Activated CD4-positive, alpha-beta T cell treated with anti-CD3 and anti-CD28 coated beads, Interleukin-2, amount 10 ng/mL, durations not matched to agents 7 days and 5 days (primary cell): ENCODE measurements at regions of chr12 and their contacts with region 1.

Region 1: GRCh38 chr12:55817346-55818139 is at the starts of genes ORMDL2 and SARNP:
- DNase-seq: peak; percentile 99
- H3K4me3 Mint-ChIP-seq: no peak within 1 kb of the TSS
- H3K27ac Mint-ChIP-seq: no peak within 1 kb of the TSS
- H3K4me1 Mint-ChIP-seq: peaks cover 44% of the 10 kb centered on the region
- H3K27me3 Mint-ChIP-seq: no peaks in the 10 kb centered on the region
- total RNA-seq, gene ORMDL2: 52.7 to 67.1 TPM
- total RNA-seq, gene SARNP: 87.5 to 102 TPM

Region 2: DNA sequence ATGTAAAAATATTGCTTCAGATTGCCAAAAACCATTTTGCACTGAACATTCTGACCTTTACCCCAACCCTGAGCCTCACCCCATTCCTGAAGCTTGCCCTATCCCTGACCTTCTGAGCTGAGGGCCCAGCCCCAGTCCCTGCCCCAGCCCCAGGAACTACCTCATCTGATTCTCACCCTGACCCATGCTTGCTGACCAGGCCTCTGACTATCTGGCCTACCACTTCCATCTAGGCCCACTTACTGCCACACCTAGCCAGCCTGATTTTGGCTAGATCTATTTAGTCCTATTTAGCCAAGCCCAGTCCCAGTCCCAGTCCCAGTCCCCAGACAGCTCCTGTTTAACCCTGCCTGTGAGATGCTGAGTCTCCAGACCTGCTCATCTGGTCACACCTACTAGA is 147.3 kb before region 1 on chr12:
- CTCF ChIA-PET with region 1: no interaction called
- POLR2A ChIA-PET with region 1: no interaction called
- DNase-seq: no peak
- H3K4me3 Mint-ChIP-seq: no peak overlapping the region
- H3K27ac Mint-ChIP-seq: no peak overlapping the region
- H3K4me1 Mint-ChIP-seq: no peaks in the 10 kb centered on the region
- H3K27me3 Mint-ChIP-seq: peaks cover 6% of the 10 kb centered on the region

Region 3: DNA sequence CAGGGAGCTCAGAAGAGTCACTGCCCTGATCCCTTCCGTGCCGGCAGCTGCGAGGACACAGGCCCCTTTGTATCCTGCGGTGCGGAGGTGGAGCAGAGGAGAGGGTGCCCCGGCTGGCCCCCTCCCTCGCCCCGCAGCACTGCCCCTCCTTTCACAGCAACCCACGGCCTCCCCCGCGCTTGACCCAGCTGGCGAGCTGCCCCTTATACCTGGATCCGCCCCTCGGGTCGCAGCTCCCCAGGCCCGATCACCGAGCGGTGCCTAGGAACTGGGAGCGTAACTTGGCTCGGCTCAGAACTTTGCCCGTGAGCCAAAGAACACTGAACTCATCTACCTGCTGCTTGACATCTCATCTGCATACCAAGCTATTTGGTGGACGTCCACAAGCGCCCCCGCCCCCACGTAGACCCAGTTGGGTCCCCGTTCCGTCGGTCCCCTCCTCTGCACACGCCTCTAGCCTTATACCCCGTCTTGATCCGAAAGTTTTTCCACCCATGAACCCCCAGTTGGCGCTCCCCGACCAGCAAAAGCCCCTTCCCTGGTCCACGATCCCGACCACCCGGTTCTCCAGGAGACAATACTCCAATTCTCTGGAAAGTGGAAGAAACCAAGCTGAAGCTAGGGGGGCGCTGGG is 12.5 kb after region 1 on chr12:
- CTCF ChIA-PET with region 1: interaction called, 16 read pairs
- POLR2A ChIA-PET with region 1: interaction called, 27 read pairs
- DNase-seq: peak; percentile 31
- H3K4me3 Mint-ChIP-seq: peak overlapping the region; percentile 96
- H3K27ac Mint-ChIP-seq: peak overlapping the region; percentile 90
- H3K4me1 Mint-ChIP-seq: peaks cover 54% of the 10 kb centered on the region
- H3K27me3 Mint-ChIP-seq: no peaks in the 10 kb centered on the region